ENCODE measurements at regions of chr5 and their contacts with region 1.

Region 1: GRCh38 chr5:62584391-62584790 is 5.8 kb downstream of the LRRC70 start:
- DNase-seq: no peak
- ATAC-seq: no peak
- H3K4me3 Mint-ChIP-seq: no peak overlapping the region
- H3K27ac Mint-ChIP-seq: no peak overlapping the region
- H3K4me1 Mint-ChIP-seq: peaks cover 3% of the 10 kb centered on the region; the same call in 1 of the 2 replicates
- H3K27me3 Mint-ChIP-seq: no peaks in the 10 kb centered on the region
- CTCF ChIP-seq: no peak

Region 2: GRCh38 chr5:62522811-62523210 is 61.6 kb before region 1 on chr5:
- CTCF ChIA-PET with region 1: no interaction called
- POLR2A ChIA-PET with region 1: interaction called, 10 read pairs
- DNase-seq: no peak
- ATAC-seq: peak; percentile 78
- H3K4me3 Mint-ChIP-seq: peak overlapping the region; percentile 14
- H3K27ac Mint-ChIP-seq: peak overlapping the region; percentile 69
- H3K4me1 Mint-ChIP-seq: peaks cover 21% of the 10 kb centered on the region
- H3K27me3 Mint-ChIP-seq: no peaks in the 10 kb centered on the region; the same call in 1 of the 2 replicates
- CTCF ChIP-seq: no peak

Measured in WTC11 (cell line).